ENCODE measurements at regions of chr18 and their contacts with region 1.

Region 1: GRCh38 chr18:2932247-2933181 is 80.4 kb downstream of the LPIN2 start:
- DNase-seq: peak in 1 of 6 donors; percentile 42
- ATAC-seq: peak; percentile 72 to 90 (median 86)
- H3K4me3 ChIP-seq: no peak overlapping the region
- H3K27ac ChIP-seq: no peak overlapping the region
- H3K4me1 ChIP-seq: peaks cover 0 to 8% (median 3%) of the 10 kb centered on the region in 3 donors
- H3K27me3 ChIP-seq: no peaks in the 10 kb centered on the region
- CTCF ChIP-seq: peak; percentile 45 to 72 (median 56)

Region 2: GRCh38 chr18:2985628-2986027 is 53.1 kb after region 1 on chr18:
- intact Hi-C with region 1: no loop called
- DNase-seq: no peak
- ATAC-seq: peak; percentile 67 to 77 (median 76)
- H3K4me3 ChIP-seq: no peak overlapping the region
- H3K27ac ChIP-seq: peak overlapping the region in 3 of 4 donors; percentile 10 to 80 (median 73)
- H3K4me1 ChIP-seq: peaks cover 21 to 58% (median 45%) of the 10 kb centered on the region in 3 donors
- H3K27me3 ChIP-seq: no peaks in the 10 kb centered on the region
- CTCF ChIP-seq: peak in 3 of 4 donors; percentile 37 to 44 (median 41)

Region 3: GRCh38 chr18:3151399-3152264 is 219.1 kb after region 1 on chr18:
- intact Hi-C with region 1: loop called in 1 of 3 experiments (anchors 10 kb)
- DNase-seq: no peak
- ATAC-seq: peak; percentile 41 to 65 (median 54)
- H3K4me3 ChIP-seq: no peak overlapping the region
- H3K27ac ChIP-seq: no peak overlapping the region
- H3K4me1 ChIP-seq: peaks cover 0 to 12% (median 7%) of the 10 kb centered on the region in 3 donors
- H3K27me3 ChIP-seq: no peaks in the 10 kb centered on the region
- CTCF ChIP-seq: peak; percentile 43 to 74 (median 64)

Region 4: DNA sequence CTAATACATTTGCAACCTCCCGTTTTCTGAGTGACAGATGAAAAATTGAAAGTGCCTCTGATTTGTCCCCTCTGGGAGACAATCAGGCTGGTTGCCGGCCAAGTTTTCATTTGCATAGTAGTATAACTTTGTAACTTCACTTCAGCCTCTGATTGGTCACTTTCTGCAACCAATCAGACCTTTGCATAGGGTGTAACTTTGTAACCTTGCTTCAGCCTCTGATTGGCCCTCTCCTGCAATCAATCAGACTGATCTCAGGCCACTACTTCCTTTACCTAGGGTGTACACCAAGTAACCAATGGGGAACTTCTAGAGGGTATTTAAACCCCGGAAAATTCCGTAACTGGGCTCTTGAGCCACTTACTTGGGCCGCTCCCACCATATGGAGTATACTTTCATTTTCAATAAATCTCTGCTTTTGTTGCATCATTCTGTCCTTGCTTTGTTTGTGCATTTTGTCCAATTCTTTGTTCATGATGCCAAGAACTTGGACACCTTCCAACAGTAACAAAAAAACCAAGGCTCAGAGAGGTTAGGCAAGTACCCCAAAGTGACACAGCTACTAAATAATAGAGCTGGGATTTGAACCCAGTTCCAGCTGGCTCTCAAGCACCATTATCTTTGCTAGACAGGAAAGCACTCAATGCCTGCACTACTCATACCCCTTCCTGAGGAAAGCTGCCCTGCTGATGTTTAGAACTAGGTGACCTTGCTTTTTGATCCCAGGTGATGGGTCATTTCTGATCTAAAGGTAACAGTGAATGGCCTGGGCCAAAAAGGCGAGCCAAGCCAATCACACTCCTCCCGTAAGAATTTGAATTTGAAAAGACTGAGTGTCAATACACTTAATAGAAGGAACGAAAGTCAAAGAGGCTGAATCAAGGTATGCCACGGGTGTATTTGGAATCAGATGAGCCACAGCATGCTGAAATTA is 298.2 kb after region 1 on chr18:
- intact Hi-C with region 1: no loop called
- DNase-seq: no peak
- ATAC-seq: peak; percentile 11 to 64 (median 26)
- H3K4me3 ChIP-seq: no peak overlapping the region
- H3K27ac ChIP-seq: no peak overlapping the region
- H3K4me1 ChIP-seq: peaks cover 10 to 24% (median 23%) of the 10 kb centered on the region in 3 donors
- H3K27me3 ChIP-seq: no peaks in the 10 kb centered on the region
- CTCF ChIP-seq: no peak

Region 5: GRCh38 chr18:3245853-3246634 is 313.5 kb after region 1 on chr18:
- intact Hi-C with region 1: loop called in 2 of 3 experiments (anchors 5 to 10 kb)
- DNase-seq: peak; percentile 86 to 95 (median 90)
- ATAC-seq: peak; percentile 70 to 88 (median 80)
- H3K4me3 ChIP-seq: peak overlapping the region; percentile 10 to 88 (median 50)
- H3K27ac ChIP-seq: peak overlapping the region; percentile 95 to 99 (median 98)
- H3K4me1 ChIP-seq: peaks cover 11 to 25% (median 24%) of the 10 kb centered on the region in 3 donors
- H3K27me3 ChIP-seq: no peaks in the 10 kb centered on the region
- CTCF ChIP-seq: peak; percentile 75 to 91 (median 90)